HEK293T (cell line): ENCODE measurements at regions of chr3 and their contacts with region 1.

Region 1: GRCh38 chr3:130537673-130538304 is 20.8 kb downstream of the COL6A6 start:
- DNase-seq: no peak

Region 2: GRCh38 chr3:130276203-130276803 is 261.5 kb before region 1 on chr3:
- CTCF ChIA-PET with region 1: interaction called, 15 read pairs
- POLR2A ChIA-PET with region 1: no interaction called
- DNase-seq: peak; percentile 71

Region 3: DNA sequence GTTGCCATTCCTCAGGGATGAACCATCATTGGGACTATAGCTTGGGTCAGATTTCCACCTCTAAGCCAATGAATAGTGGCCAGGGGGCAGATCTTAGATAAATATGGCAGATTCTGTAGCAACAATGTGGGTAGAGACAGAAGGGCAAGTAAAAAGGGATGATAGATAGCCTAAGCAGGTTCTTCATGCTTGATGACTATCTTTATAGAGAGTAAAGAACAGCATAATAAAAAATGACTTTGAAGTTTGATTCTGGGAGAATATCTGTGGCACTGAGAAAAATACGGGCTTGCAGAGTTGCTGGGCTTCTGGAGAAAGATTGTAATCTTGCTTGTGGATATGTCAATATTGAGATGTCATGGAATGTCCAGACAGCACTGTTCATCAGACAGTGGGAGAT is 209.2 kb before region 1 on chr3:
- CTCF ChIA-PET with region 1: no interaction called
- POLR2A ChIA-PET with region 1: no interaction called
- DNase-seq: no peak